ENCODE measurements at regions of chr13 and their contacts with region 1.

Region 1: DNA sequence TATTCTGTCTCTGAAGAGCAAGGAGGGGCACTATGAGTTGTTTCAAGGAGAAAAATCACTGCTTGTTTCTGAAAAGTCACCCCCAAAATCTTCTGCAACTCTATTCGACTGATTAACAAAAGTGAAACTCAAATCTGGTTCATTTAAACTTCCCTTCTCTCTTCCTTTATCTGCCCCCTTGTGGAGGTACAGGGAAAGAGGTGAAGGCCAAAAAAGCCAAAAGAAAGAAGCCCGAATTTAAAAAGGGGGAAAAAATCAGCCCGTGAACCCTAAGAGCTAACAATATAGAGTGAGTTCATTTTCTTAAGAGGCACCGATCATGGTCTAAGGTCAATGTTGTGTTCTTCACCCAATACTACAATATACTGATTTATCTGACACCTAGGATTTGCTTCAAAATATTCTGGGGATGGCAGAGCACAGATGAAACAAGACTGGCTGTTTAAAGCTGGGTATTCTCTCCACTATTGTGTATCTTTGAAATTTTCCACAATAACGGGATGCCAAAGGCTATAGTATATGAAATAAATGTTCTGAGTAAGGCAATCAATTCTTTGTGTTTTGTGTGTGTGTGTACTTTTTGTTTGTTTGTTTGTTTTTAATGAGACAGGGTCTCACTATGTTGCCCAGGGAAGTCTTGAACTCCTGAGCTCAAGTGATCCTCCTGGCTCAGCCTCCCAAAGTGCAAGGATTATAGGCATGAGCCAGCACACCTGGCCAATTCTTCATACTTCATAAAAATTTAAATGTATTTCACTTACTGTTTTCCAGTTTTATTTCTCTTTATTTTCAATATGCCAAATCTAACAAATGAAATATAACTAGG is 55.0 kb upstream of the EEF1AKMT1 start:
- DNase-seq: peak; percentile 55 to 62
- H3K4me3 ChIP-seq: no peak overlapping the region
- H3K4me1 ChIP-seq: no peaks in the 10 kb centered on the region; the same call in 1 of the 2 replicates
- H3K27me3 ChIP-seq: no peaks in the 10 kb centered on the region

Region 2: DNA sequence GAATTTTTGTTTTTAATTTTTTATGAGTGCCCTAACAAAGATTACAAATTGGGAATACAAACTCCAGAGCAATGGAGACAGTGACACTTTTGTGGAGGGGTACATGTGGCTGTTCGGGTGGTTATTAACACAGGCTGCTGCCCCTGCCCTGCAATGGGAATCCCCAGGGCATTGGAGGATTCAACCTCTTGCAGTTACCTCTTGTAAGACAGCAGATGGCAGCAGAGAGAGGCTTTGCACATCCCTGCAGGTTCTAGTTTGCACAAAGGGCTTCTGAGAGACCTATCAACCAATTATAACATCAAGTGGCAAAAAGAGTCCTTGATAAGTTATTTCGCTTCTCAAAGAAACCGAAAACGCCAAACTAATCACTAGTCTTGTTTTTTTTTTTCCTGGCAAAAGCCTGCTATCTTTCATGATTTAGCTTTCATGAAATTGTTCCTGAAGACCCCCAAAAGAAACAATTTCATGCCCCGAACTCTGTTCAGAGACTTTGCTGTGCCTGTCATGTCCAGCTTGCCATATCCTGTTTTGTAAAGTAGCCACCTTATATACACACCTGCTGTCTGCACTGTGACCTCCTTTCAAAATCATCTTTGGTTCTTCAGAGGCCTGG is 646.4 kb before region 1 on chr13:
- in situ Hi-C with region 1: loop called (anchors 25 kb)
- DNase-seq: peak; percentile 69 to 79
- H3K4me3 ChIP-seq: no peak overlapping the region
- H3K4me1 ChIP-seq: no peaks in the 10 kb centered on the region
- H3K27me3 ChIP-seq: peaks cover 4% of the 10 kb centered on the region; the same call in 1 of the 2 replicates

Region 3: DNA sequence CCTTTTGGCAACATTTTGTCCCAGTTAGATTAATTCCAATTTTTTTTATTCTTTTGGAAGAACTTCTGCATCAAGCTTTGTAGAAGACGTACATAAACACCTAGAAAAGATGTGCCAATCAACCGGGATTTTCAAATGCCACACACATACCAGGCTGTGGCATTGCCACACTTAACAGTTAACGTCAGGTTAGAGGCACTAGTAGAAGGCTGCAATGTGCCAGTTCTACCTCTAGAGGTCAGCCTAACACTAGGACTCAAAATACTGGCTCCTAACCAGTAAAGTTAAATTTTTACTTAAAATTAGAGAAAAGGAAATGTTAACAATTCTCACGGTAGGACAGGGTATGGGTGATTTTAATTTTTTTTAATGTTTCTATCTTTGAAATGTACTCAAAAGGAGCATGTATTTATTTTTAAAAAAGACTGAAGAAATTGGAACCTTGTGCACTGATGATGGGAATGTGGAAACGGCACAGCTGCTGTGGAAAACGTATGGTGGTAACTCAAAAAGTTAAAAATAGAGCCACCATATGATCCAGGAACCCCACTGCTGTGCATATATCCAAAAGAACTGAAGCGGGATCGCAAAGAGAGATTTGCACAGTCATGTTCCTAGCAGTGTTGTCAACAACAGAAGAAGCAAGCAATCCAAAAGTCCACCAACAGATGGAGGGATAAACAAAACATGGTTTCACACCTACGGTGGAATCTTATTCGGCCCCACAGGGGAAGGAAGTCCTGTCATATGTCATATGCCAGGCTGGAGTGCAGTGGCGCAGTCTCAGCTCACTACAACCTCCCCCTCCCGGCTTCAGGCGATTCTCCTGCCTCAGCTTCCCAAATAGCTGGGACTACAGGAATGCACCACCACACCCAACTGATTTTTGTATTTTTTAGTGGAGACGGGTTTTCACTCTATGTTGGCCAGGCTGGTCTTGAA is 333.4 kb before region 1 on chr13:
- in situ Hi-C with region 1: loop called (anchors 10 kb)
- DNase-seq: peak; percentile 53 to 67
- H3K4me3 ChIP-seq: no peak overlapping the region
- H3K4me1 ChIP-seq: no peaks in the 10 kb centered on the region
- H3K27me3 ChIP-seq: no peaks in the 10 kb centered on the region

Region 4: GRCh38 chr13:21181671-21182070 is 352.9 kb after region 1 on chr13:
- in situ Hi-C with region 1: no loop called
- DNase-seq: no peak
- H3K4me3 ChIP-seq: no peak overlapping the region
- H3K4me1 ChIP-seq: peaks cover 16% of the 10 kb centered on the region
- H3K27me3 ChIP-seq: no peaks in the 10 kb centered on the region